Activated B cell treated with CpG ODN at 0.5 μM for 24 hours (primary cell): ENCODE measurements at regions of chr2 and their contacts with region 1.

Region 1: GRCh38 chr2:24971536-24972314 is at the start of gene DNAJC27:
- DNase-seq: peak; percentile 96
- ATAC-seq: peak; percentile 90
- H3K4me3 Mint-ChIP-seq: peak within 1 kb of the TSS; percentile 96
- H3K27ac Mint-ChIP-seq: peak within 1 kb of the TSS; percentile 100
- H3K4me1 Mint-ChIP-seq: peaks cover 21% of the 10 kb centered on the region
- H3K27me3 Mint-ChIP-seq: no peaks in the 10 kb centered on the region
- CTCF ChIP-seq: no peak
- total RNA-seq, gene DNAJC27: 9.0 and 9.7 TPM in 2 replicates

Region 2: GRCh38 chr2:24490674-24491625 is 480.8 kb before region 1 on chr2 and contains the start of gene NCOA1:
- CTCF ChIA-PET with region 1: no interaction called
- POLR2A ChIA-PET with region 1: no interaction called
- intact Hi-C with region 1: loop called (anchors 5 kb)
- DNase-seq: peak; percentile 87
- ATAC-seq: peak; percentile 82
- H3K4me3 Mint-ChIP-seq: peak within 1 kb of the TSS; percentile 94
- H3K27ac Mint-ChIP-seq: peak within 1 kb of the TSS; percentile 95
- H3K4me1 Mint-ChIP-seq: peaks cover 42% of the 10 kb centered on the region
- H3K27me3 Mint-ChIP-seq: no peaks in the 10 kb centered on the region
- CTCF ChIP-seq: no peak
- total RNA-seq, gene NCOA1: 44.9 and 49.5 TPM in 2 replicates

Region 3: GRCh38 chr2:24886691-24887304 is 84.9 kb before region 1 on chr2:
- CTCF ChIA-PET with region 1: no interaction called
- POLR2A ChIA-PET with region 1: no interaction called
- intact Hi-C with region 1: loop called (anchors 5 kb)
- DNase-seq: peak; percentile 49
- ATAC-seq: peak; percentile 93
- H3K4me3 Mint-ChIP-seq: peak overlapping the region; percentile 90
- H3K27ac Mint-ChIP-seq: peak overlapping the region; percentile 97
- H3K4me1 Mint-ChIP-seq: peaks cover 61% of the 10 kb centered on the region
- H3K27me3 Mint-ChIP-seq: no peaks in the 10 kb centered on the region
- CTCF ChIP-seq: no peak

Region 4: GRCh38 chr2:25127646-25128045 is 155.9 kb after region 1 on chr2:
- CTCF ChIA-PET with region 1: interaction called, 46 read pairs
- POLR2A ChIA-PET with region 1: interaction called, 6 read pairs
- intact Hi-C with region 1: loop called (anchors 1 kb)
- DNase-seq: no peak
- ATAC-seq: no peak
- H3K4me3 Mint-ChIP-seq: no peak overlapping the region
- H3K27ac Mint-ChIP-seq: no peak overlapping the region
- H3K4me1 Mint-ChIP-seq: peaks cover 15% of the 10 kb centered on the region
- H3K27me3 Mint-ChIP-seq: peaks cover 19% of the 10 kb centered on the region
- CTCF ChIP-seq: no peak

Region 5: GRCh38 chr2:25301453-25302352 is 330.0 kb after region 1 on chr2:
- CTCF ChIA-PET with region 1: no interaction called
- POLR2A ChIA-PET with region 1: no interaction called
- intact Hi-C with region 1: loop called (anchors 2 kb)
- DNase-seq: peak; percentile 61
- ATAC-seq: peak; percentile 95
- H3K4me3 Mint-ChIP-seq: peak overlapping the region; percentile 42
- H3K27ac Mint-ChIP-seq: peak overlapping the region; percentile 46
- H3K4me1 Mint-ChIP-seq: peaks cover 39% of the 10 kb centered on the region
- H3K27me3 Mint-ChIP-seq: no peaks in the 10 kb centered on the region
- CTCF ChIP-seq: no peak

Region 6: DNA sequence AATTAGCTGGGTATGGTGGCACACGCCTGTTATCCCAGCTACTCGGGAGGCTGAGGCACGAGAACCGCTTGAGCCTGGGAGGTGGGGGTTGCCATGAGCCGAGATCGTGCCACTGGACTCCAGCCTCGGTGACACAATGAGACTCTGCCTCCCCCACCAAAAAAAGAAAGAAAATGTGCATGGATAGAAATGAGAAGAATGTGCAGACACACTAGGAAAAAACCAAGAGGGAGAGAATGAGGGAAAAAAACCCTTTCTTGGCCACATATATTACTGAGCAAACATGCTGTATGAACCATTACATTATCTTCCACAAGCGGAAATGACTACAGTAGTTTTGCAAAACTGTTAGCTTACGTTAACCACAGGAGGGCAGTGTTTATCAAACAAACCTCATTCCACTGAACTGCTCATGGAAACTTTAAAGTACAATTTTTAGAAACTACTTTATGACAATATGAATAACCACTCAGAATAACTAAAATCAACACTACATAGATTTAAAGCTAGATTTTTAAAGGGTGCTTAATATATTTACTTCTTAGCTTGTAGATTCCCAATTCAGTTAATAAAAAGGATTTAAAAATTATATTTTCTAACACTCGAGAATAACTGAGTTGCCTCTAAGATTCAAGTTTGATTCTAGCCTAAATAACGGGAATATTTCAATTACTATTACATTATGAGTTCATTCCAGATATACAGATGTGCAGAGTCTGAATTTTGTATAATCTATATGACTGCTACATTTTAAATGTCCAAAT is 880.2 kb after region 1 on chr2:
- CTCF ChIA-PET with region 1: no interaction called
- POLR2A ChIA-PET with region 1: no interaction called
- intact Hi-C with region 1: loop called (anchors 5 kb)
- DNase-seq: no peak
- ATAC-seq: peak; percentile 91
- H3K4me3 Mint-ChIP-seq: peak overlapping the region; percentile 58
- H3K27ac Mint-ChIP-seq: peak overlapping the region; percentile 42
- H3K4me1 Mint-ChIP-seq: peaks cover 36% of the 10 kb centered on the region
- H3K27me3 Mint-ChIP-seq: no peaks in the 10 kb centered on the region
- CTCF ChIP-seq: no peak